ENCODE measurements at regions of chr10 and their contacts with region 1.

Region 1: DNA sequence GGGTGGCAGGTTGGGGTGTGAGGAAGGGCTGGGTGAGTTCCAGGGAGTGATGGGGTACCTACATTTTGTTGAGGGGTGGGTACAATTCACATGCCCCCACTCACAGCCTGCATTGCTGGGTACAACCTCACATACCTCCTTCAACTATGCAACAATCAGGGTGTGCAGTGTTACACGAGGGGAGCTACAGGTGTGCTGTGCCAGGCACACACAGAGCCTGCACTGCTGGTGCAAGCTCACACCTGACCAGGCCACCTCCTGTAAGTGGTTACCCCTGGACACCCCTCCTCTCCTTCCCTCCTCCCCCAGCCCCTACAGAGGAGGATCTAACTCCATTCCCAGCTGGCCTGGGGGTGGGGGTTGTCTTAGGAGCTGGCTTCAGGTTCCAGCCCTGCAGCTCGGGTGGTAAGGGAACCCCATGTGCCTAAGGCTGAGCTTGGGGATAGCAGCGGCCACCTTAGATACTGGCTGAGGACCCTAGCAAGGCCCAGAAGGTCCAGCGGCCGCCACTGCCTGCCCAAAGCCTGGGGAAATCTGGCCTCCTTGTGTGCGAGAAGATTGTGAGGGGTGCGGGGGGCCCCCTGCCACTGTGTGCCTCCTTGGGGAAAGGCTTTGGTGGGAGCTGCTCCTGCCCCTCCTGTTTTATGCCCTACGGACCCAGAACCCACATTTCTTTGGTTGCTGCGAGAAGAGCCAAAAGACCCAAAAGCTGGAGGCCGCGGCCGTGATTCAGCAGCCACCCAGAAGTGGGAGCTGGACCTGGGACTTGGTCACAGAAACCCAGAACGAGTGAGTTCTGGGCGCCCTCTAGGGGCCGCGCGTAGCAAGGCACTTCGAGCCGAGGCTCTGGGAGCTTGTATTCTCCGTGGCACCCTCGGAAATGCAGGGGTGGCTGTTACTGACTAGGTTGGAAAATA is 10.8 kb downstream of the TLX1 start:
- DNase-seq: peak; percentile 95
- H3K4me3 ChIP-seq: no peak overlapping the region
- H3K27ac ChIP-seq: no peak overlapping the region
- H3K4me1 ChIP-seq: peaks cover 13 to 45% (median 31%) of the 10 kb centered on the region in 4 donors
- H3K27me3 ChIP-seq: peaks cover 7 to 100% (median 78%) of the 10 kb centered on the region in 4 donors
- CTCF ChIP-seq: peak; percentile 88 to 100 (median 92)
- EP300 ChIP-seq: no peak
- POLR2A ChIP-seq: no peak

Region 2: GRCh38 chr10:101060036-101060950 is 81.6 kb before region 1 on chr10:
- intact Hi-C with region 1: loop called (anchors 2 kb)
- DNase-seq: peak; percentile 98
- H3K4me3 ChIP-seq: peak overlapping the region; percentile 69 to 82 (median 80)
- H3K27ac ChIP-seq: peak overlapping the region; percentile 91 to 97 (median 94)
- H3K4me1 ChIP-seq: peaks cover 30 to 49% (median 41%) of the 10 kb centered on the region in 4 donors
- H3K27me3 ChIP-seq: peaks cover 0 to 34% (median 15%) of the 10 kb centered on the region in 4 donors
- CTCF ChIP-seq: peak; percentile 81 to 87 (median 85)
- EP300 ChIP-seq: no peak
- POLR2A ChIP-seq: no peak

Region 3: DNA sequence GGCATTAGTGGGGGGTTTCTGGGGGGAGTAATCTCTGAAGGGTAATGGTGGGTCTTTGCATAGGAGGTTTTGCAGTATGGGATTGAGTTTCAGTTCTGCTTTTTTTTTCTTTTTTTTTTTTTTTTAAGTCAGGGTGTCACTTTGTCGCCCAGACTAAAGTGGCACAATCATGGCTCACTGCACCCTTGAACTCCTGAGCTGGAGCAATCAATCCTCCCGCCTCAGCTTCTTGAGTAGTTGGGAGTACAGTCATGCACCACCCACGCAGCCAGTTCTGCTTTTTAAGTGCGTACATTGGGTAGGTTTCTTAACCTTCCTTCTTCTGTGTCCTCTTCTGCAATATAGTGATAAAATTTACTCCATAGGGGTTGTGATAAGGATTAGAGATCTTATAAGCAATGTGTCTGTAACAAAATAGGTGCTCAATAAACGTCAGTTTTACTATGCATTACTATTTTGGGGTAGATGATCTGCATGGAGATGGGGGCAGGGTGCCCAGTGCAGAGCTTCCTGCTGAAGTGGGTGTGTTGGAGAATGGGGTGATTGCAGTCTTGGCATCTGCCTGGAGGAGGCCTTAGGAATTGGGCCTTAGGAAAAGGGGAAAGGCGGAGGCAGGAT is 70.5 kb before region 1 on chr10:
- intact Hi-C with region 1: no loop called
- DNase-seq: no peak
- H3K4me3 ChIP-seq: no peak overlapping the region
- H3K27ac ChIP-seq: no peak overlapping the region
- H3K4me1 ChIP-seq: peaks cover 13 to 14% (median 14%) of the 10 kb centered on the region in 4 donors
- H3K27me3 ChIP-seq: peaks cover 0 to 68% (median 23%) of the 10 kb centered on the region in 4 donors
- CTCF ChIP-seq: no peak
- EP300 ChIP-seq: no peak
- POLR2A ChIP-seq: no peak

Region 4: DNA sequence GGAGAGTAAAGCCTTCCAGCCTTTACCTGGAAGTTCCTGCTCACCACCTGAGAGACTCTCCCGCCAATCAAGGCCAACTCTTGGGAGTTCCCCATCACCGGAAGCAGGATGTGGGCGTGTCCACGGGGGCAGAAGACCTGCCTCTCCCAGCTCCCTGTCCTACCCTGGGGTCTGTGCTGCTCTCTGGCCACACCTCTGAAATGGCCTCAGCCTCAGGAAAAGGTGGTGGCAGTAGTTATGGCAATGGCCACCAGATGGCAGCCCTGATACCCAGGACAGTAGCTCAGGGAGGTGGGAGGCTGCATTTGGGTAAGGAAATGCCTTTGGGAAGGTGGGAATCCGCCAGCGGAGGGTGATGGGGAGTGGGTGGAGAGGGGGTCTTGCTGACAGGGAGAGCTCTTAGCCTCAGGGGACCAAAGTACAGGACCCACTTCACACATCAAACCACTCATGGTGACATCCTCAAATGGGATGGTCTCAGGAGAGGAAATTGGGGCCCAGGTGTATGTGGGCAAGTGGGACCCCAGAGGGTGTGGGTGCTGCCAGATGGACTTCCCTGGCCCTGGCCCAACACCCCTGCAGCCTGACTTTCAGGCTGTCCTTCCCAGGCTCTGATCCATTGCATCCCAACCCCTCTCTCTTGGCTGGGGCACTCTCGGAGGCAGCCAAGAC is 46.2 kb before region 1 on chr10:
- intact Hi-C with region 1: loop called (anchors 1 kb)
- DNase-seq: no peak
- H3K4me3 ChIP-seq: no peak overlapping the region
- H3K27ac ChIP-seq: no peak overlapping the region
- H3K4me1 ChIP-seq: no peaks in the 10 kb centered on the region
- H3K27me3 ChIP-seq: peaks cover 0 to 100% (median 27%) of the 10 kb centered on the region in 4 donors
- CTCF ChIP-seq: peak; percentile 65 to 81 (median 69)
- EP300 ChIP-seq: no peak
- POLR2A ChIP-seq: no peak

Region 5: GRCh38 chr10:101249171-101249581 is 107.3 kb after region 1 on chr10:
- intact Hi-C with region 1: no loop called
- DNase-seq: no peak
- H3K4me3 ChIP-seq: no peak overlapping the region
- H3K27ac ChIP-seq: no peak overlapping the region
- H3K4me1 ChIP-seq: peaks cover 0 to 6% (median 5%) of the 10 kb centered on the region in 4 donors
- H3K27me3 ChIP-seq: peaks cover 0 to 65% (median 0%) of the 10 kb centered on the region in 4 donors
- CTCF ChIP-seq: no peak
- EP300 ChIP-seq: no peak
- POLR2A ChIP-seq: no peak

Measured in esophagus muscularis mucosa (tissue), 4 donors.